ENCODE measurements at regions of chr7 and their contacts with region 1.

Region 1: GRCh38 chr7:111486472-111487142 is 75.7 kb downstream of the IMMP2L start:
- DNase-seq: no peak
- H3K4me3 Mint-ChIP-seq: no peak overlapping the region
- H3K27ac Mint-ChIP-seq: no peak overlapping the region
- H3K4me1 Mint-ChIP-seq: no peaks in the 10 kb centered on the region
- H3K27me3 Mint-ChIP-seq: no peaks in the 10 kb centered on the region

Region 2: GRCh38 chr7:109844362-109844761 is 1642.2 kb before region 1 on chr7:
- intact Hi-C with region 1: loop called (anchors 10 kb)
- DNase-seq: no peak
- H3K4me3 Mint-ChIP-seq: no peak overlapping the region
- H3K27ac Mint-ChIP-seq: no peak overlapping the region
- H3K4me1 Mint-ChIP-seq: no peaks in the 10 kb centered on the region
- H3K27me3 Mint-ChIP-seq: no peaks in the 10 kb centered on the region

Region 3: DNA sequence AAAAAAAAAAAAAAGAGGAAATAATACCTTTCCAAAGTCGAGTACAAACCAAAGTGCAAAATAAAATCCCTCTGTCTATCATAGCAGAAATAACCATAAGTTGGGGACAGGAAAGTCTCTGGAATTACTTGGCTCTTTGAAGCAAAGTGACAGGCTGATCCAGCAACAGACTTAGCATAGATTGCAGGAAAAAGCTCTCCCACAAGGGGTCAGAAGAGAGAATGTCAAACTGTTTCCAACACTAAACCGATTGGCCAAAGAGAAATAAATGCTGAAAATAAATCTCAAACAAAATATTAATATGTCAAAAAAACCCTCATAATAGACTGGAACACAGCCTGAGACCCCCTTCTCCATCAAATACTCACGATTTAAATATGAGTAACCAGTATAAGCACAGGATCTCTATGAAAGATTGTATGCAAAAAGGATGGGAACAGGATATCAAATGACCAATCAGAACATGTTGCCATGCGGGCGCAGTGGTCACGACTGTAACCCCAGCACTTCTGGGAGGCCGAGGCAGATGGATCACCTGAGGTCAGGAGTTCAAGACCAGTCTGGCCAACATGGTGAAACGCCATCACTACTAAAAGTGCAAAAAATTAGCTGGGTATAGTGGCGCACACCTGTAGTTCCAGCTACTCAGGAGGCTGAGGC is 1396.4 kb before region 1 on chr7:
- intact Hi-C with region 1: loop called (anchors 5 kb)
- DNase-seq: no peak
- H3K4me3 Mint-ChIP-seq: no peak overlapping the region
- H3K27ac Mint-ChIP-seq: no peak overlapping the region
- H3K4me1 Mint-ChIP-seq: no peaks in the 10 kb centered on the region
- H3K27me3 Mint-ChIP-seq: no peaks in the 10 kb centered on the region

Region 4: GRCh38 chr7:110595690-110596325 is 890.8 kb before region 1 on chr7:
- intact Hi-C with region 1: loop called (anchors 10 kb)
- DNase-seq: no peak
- H3K4me3 Mint-ChIP-seq: no peak overlapping the region
- H3K27ac Mint-ChIP-seq: no peak overlapping the region
- H3K4me1 Mint-ChIP-seq: peaks cover 5% of the 10 kb centered on the region
- H3K27me3 Mint-ChIP-seq: peaks cover 12% of the 10 kb centered on the region

Region 5: DNA sequence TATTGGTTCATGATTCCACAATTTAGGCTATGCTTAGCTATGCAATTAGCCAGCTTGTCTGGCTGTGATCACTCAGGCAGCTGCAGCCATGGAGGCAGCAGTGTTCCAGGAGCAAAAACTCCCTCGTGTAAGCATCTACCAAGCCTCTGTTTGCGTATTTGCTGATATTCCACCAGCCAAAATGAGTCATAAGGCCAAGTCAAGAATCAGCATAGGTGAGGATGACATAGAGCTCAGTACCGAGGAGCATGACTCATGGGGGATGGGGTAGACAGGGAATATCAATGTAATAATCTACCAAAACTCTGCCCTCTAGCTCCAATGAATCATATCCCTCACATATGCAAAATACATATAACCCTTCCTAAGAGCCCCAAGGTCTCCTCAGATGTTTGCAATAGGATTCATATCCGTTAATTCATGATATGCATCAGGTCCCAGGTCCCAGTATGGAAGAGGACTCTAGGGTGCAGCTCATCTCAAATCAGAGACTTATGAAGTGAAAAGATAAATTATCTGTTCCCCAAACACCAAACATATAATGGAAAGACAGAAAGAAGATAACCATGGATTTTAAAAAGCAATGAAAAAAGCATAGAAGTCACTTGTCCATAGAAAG is 12.5 kb after region 1 on chr7:
- intact Hi-C with region 1: no loop called
- DNase-seq: no peak
- H3K4me3 Mint-ChIP-seq: no peak overlapping the region
- H3K27ac Mint-ChIP-seq: no peak overlapping the region
- H3K4me1 Mint-ChIP-seq: peaks cover 8% of the 10 kb centered on the region
- H3K27me3 Mint-ChIP-seq: no peaks in the 10 kb centered on the region

Region 6: DNA sequence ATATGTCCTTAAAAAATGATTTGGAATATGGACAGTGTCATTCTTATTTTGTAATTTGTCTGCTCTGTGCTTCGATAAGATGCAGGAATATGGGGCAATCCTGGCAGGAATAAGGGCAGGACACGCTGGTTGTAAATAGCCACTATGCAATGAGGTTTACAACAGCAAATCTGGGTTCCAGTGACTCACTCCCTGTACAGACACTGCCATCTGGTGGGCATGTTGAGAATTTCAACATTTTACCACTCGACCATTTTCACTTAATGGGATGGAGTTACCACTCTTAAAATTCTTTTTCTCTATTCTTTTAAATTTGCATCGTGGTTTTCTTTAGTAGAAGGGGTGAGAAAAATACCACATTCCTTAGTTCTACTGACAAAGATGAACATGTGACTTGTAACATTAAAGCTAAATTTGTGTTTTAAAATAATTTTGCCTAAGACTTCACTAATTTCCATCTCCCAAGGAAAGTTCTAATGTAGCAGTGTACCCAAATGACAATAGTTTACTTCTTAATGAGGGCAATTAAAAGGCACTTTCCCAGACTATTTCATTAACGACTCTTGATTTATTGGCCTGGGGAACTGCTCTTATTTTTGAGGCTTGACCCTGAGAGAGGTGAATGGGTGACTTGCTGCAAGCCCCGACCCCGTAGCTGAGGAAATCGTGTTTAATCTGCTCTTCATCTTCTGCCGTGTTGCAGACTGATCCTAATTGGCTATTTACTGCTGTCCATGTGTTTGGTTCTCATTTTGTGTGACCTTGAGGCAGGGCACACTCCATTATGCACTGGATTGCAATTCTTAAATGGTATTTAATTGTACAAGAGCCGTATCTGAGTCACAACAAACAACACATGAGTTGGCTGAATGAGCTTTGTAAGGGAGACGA is 249.3 kb after region 1 on chr7:
- intact Hi-C with region 1: loop called (anchors 10 kb)
- DNase-seq: peak; percentile 22
- H3K4me3 Mint-ChIP-seq: no peak overlapping the region
- H3K27ac Mint-ChIP-seq: no peak overlapping the region
- H3K4me1 Mint-ChIP-seq: no peaks in the 10 kb centered on the region
- H3K27me3 Mint-ChIP-seq: peaks cover 5% of the 10 kb centered on the region

Measured in activated T-helper 2 cell treated with anti-CD3 and anti-CD28 coated beads, Interferon-gamma antibody, Interleukin-2, Interleukin-4, amounts not matched to agents 10 μg/mL and 5 μg/mL and 100 μg/mL, durations not matched to agents 14 hours and 24 hours and 36 hours (primary cell).